B cell (primary cell): ENCODE measurements at regions of chr17 and their contacts with region 1.

Region 1: GRCh38 chr17:78421484-78422266 is 43.2 kb downstream of the PGS1 start:
- DNase-seq: peak; percentile 82
- ATAC-seq: peak; percentile 96
- H3K4me3 ChIP-seq: no peak overlapping the region
- H3K4me3 Mint-ChIP-seq: no peak overlapping the region
- H3K27ac ChIP-seq: no peak overlapping the region
- H3K27ac Mint-ChIP-seq: no peak overlapping the region
- H3K4me1 ChIP-seq: no peaks in the 10 kb centered on the region
- H3K4me1 Mint-ChIP-seq: peaks cover 1% of the 10 kb centered on the region
- H3K27me3 ChIP-seq: no peaks in the 10 kb centered on the region
- H3K27me3 Mint-ChIP-seq: no peaks in the 10 kb centered on the region
- CTCF ChIP-seq: peak; percentile 99

Region 2: GRCh38 chr17:78019367-78019975 is 402.2 kb before region 1 on chr17:
- CTCF ChIA-PET with region 1: interaction called, 29 read pairs
- POLR2A ChIA-PET with region 1: no interaction called
- intact Hi-C with region 1: no loop called
- DNase-seq: peak; percentile 41
- ATAC-seq: no peak
- H3K4me3 ChIP-seq: no peak overlapping the region
- H3K4me3 Mint-ChIP-seq: no peak overlapping the region
- H3K27ac ChIP-seq: no peak overlapping the region
- H3K27ac Mint-ChIP-seq: no peak overlapping the region
- H3K4me1 ChIP-seq: no peaks in the 10 kb centered on the region
- H3K4me1 Mint-ChIP-seq: peaks cover 6% of the 10 kb centered on the region
- H3K27me3 ChIP-seq: no peaks in the 10 kb centered on the region
- H3K27me3 Mint-ChIP-seq: no peaks in the 10 kb centered on the region
- CTCF ChIP-seq: peak; percentile 77

Region 3: GRCh38 chr17:78082988-78083387 is 338.7 kb before region 1 on chr17:
- CTCF ChIA-PET with region 1: interaction called, 37 read pairs
- POLR2A ChIA-PET with region 1: no interaction called
- intact Hi-C with region 1: no loop called
- DNase-seq: no peak
- ATAC-seq: no peak
- H3K4me3 ChIP-seq: no peak overlapping the region
- H3K4me3 Mint-ChIP-seq: no peak overlapping the region
- H3K27ac ChIP-seq: no peak overlapping the region
- H3K27ac Mint-ChIP-seq: no peak overlapping the region
- H3K4me1 ChIP-seq: no peaks in the 10 kb centered on the region
- H3K4me1 Mint-ChIP-seq: no peaks in the 10 kb centered on the region
- H3K27me3 ChIP-seq: no peaks in the 10 kb centered on the region
- H3K27me3 Mint-ChIP-seq: no peaks in the 10 kb centered on the region
- CTCF ChIP-seq: no peak

Region 4: GRCh38 chr17:78112518-78113226 is 309.0 kb before region 1 on chr17:
- CTCF ChIA-PET with region 1: interaction called, 7 read pairs
- POLR2A ChIA-PET with region 1: no interaction called
- intact Hi-C with region 1: loop called (anchors 10 kb)
- DNase-seq: peak; percentile 84
- ATAC-seq: peak; percentile 84
- H3K4me3 ChIP-seq: no peak overlapping the region
- H3K4me3 Mint-ChIP-seq: no peak overlapping the region
- H3K27ac ChIP-seq: peak overlapping the region in 1 of 2 donors; percentile 43
- H3K27ac Mint-ChIP-seq: peak overlapping the region; percentile 96
- H3K4me1 ChIP-seq: peaks cover 12 to 22% of the 10 kb centered on the region in 2 donors
- H3K4me1 Mint-ChIP-seq: peaks cover 24% of the 10 kb centered on the region
- H3K27me3 ChIP-seq: no peaks in the 10 kb centered on the region
- H3K27me3 Mint-ChIP-seq: no peaks in the 10 kb centered on the region
- CTCF ChIP-seq: peak; percentile 98

Region 5: DNA sequence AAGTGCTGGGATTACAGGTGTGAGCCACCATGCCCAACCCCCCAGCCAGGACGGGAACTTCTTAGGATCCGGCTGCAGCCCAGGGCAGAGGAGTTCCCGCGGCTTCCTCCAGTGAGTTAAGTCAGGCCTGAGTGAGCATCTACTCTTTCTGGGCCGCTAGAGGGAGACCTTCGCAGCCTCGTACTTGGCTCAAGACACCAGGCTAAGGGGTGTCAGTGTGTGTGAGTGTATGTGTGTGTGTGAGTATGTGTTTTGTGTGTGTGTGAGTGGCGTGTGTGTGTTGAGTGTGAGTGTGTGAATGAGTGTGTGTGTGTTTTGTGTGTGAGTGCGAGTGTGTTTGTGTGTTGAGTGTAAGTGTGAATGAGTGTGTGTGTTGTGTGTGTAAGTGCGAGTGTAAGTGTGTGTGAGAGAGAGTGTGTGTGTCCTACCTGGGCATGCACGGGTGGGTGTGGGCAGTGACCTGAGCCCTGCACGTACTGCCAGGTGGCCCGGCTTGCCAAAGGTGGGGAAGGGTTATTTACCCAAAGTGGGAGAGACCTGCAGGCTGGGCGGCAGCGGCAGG is 131.8 kb before region 1 on chr17:
- CTCF ChIA-PET with region 1: interaction called, 86 read pairs
- POLR2A ChIA-PET with region 1: interaction called, 3 read pairs
- intact Hi-C with region 1: loop called (anchors 1 kb)
- DNase-seq: peak; percentile 89
- ATAC-seq: peak; percentile 98
- H3K4me3 ChIP-seq: no peak overlapping the region
- H3K4me3 Mint-ChIP-seq: no peak overlapping the region
- H3K27ac ChIP-seq: no peak overlapping the region
- H3K27ac Mint-ChIP-seq: no peak overlapping the region
- H3K4me1 ChIP-seq: peaks cover 3 to 10% of the 10 kb centered on the region in 2 donors
- H3K4me1 Mint-ChIP-seq: no peaks in the 10 kb centered on the region
- H3K27me3 ChIP-seq: no peaks in the 10 kb centered on the region
- H3K27me3 Mint-ChIP-seq: no peaks in the 10 kb centered on the region
- CTCF ChIP-seq: peak; percentile 74